ENCODE measurements at regions of chr17 and their contacts with region 1.

Region 1: GRCh38 chr17:32461853-32462617 is 17.7 kb downstream of the PSMD11 start:
- DNase-seq: no peak
- CTCF ChIP-seq: peak; percentile 43

Region 2: GRCh38 chr17:32123782-32124181 is 338.3 kb before region 1 on chr17:
- CTCF ChIA-PET with region 1: no interaction called
- POLR2A ChIA-PET with region 1: no interaction called
- DNase-seq: no peak
- CTCF ChIP-seq: no peak

Region 3: GRCh38 chr17:32444308-32445073 is 17.5 kb before region 1 on chr17 and contains the start of gene PSMD11:
- CTCF ChIA-PET with region 1: interaction called, 139 read pairs
- POLR2A ChIA-PET with region 1: interaction called, 4 read pairs
- DNase-seq: peak; percentile 99
- CTCF ChIP-seq: peak; percentile 89

Region 4: GRCh38 chr17:32495359-32496231 is 33.6 kb after region 1 on chr17:
- CTCF ChIA-PET with region 1: interaction called, 177 read pairs
- POLR2A ChIA-PET with region 1: interaction called, 3 read pairs
- DNase-seq: no peak
- CTCF ChIP-seq: no peak

Region 5: GRCh38 chr17:32588982-32589381 is 126.9 kb after region 1 on chr17:
- CTCF ChIA-PET with region 1: interaction called, 12 read pairs
- POLR2A ChIA-PET with region 1: no interaction called
- DNase-seq: no peak
- CTCF ChIP-seq: no peak

Region 6: DNA sequence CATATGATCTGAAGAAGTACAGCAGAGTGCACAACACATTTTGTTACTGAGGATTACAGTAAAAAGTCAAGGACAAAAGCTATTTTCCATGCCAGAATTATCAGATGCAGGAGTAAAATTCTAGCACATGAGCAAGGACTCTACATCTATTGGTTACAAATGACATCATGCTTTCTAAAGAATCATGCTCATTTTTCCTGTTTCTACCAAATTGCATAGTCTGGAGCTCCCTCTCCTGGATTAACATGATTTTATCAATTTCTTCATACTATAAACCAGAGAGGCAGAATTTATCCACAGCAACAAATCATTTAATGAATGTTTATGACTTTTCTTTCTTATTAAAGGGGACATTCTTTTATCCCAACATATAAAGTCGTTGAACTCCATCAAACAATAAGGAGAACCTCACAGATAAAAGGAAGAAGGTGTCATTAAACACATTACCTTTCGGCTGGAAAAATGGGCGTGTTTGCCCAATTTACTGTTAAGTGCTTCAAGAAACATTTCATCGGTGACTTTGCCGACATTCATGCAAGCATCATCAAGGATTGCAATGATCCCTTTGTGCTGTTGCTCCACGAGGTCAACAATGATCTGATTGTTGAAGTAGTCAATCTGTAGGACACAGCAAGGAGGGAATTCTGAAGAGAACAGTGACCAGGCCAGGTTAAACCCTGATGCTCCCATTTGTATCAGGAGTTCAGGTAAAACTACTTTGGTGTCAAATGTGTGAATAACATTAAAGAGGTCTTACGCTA is 293.2 kb after region 1 on chr17:
- CTCF ChIA-PET with region 1: interaction called, 13 read pairs
- POLR2A ChIA-PET with region 1: no interaction called
- DNase-seq: peak; percentile 34
- CTCF ChIP-seq: peak; percentile 31